ENCODE measurements at regions of chr9 and their contacts with region 1.

Region 1: GRCh38 chr9:77456829-77457437 is 191.2 kb downstream of the GNA14 start:
- DNase-seq: peak; percentile 87 to 91
- H3K4me3 ChIP-seq: no peak overlapping the region
- H3K27ac ChIP-seq: peak overlapping the region; percentile 54 to 67
- H3K4me1 ChIP-seq: no peaks in the 10 kb centered on the region
- H3K27me3 ChIP-seq: no peaks in the 10 kb centered on the region
- CTCF ChIP-seq: peak; percentile 81 to 93 (median 84)
- POLR2A ChIP-seq: no peak

Region 2: GRCh38 chr9:77215874-77216273 is 241.1 kb before region 1 on chr9:
- intact Hi-C with region 1: no loop called
- DNase-seq: no peak
- H3K4me3 ChIP-seq: no peak overlapping the region
- H3K27ac ChIP-seq: no peak overlapping the region
- H3K4me1 ChIP-seq: no peaks in the 10 kb centered on the region
- H3K27me3 ChIP-seq: no peaks in the 10 kb centered on the region
- CTCF ChIP-seq: peak in 1 of 4 experiments; percentile 23
- POLR2A ChIP-seq: no peak

Region 3: GRCh38 chr9:77598524-77598923 is 141.6 kb after region 1 on chr9:
- intact Hi-C with region 1: no loop called
- DNase-seq: peak; percentile 27 to 31
- H3K4me3 ChIP-seq: no peak overlapping the region
- H3K27ac ChIP-seq: peak overlapping the region; percentile 52 to 70
- H3K4me1 ChIP-seq: peaks cover 0 to 17% of the 10 kb centered on the region in 2 donors
- H3K27me3 ChIP-seq: no peaks in the 10 kb centered on the region
- CTCF ChIP-seq: no peak
- POLR2A ChIP-seq: no peak

Region 4: DNA sequence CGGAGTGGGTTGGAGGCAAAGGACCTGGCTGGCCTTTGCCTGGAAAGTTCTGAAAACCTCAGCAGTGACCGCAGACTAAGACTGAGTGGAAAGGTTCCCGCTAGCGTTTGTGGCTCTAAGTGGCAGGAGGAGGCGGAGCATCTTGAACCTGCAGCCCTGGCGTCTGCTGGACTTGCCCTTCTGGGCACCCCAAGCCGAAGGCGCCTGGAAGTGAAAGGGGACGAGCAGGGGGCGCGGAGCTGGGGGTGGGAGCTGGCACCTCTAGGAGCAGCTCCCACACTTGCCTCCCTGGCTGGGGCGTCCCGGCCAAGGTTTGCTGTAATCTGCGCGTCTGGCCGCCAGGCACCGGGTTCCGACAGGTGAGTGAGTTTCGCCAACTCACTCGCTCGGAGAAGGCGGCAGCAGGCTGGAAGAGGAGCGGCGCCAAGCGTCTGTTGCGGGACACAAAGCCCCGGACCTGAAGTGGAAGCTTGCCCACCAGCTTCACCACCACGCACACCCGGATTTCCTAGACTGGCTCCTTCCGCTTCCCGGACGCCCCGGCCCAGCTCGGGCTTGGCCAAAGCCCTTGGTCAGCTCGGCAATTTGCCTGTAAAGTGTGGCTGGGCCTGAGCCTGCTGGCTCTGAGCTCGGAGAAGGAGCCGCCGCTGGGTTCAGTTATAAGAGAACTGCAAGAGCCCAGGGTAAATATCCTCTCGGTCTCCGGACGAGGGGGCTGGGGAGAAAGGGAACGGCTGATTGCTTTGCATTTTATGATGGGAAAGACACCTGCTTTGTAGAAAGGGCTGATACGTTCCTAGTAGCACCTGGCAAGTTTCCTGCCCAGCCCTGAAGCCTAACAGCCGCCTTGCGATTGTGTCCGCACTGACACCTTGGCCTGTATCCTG is 191.5 kb after region 1 on chr9 and contains the start of gene GNA14:
- intact Hi-C with region 1: loop called (anchors 5 kb)
- DNase-seq: peak; percentile 65 to 69
- H3K4me3 ChIP-seq: peak within 1 kb of the TSS; percentile 59 to 70
- H3K27ac ChIP-seq: peak within 1 kb of the TSS; percentile 86 to 89
- H3K4me1 ChIP-seq: no peaks in the 10 kb centered on the region
- H3K27me3 ChIP-seq: no peaks in the 10 kb centered on the region
- CTCF ChIP-seq: peak in 2 of 4 experiments; percentile 13 to 14
- POLR2A ChIP-seq: peak in 1 of 2 donors; percentile 30
- total RNA-seq, gene GNA14: 11.3 to 23.6 (median 16.2) TPM

Region 5: GRCh38 chr9:77751341-77752091 is 294.6 kb after region 1 on chr9:
- intact Hi-C with region 1: loop called (anchors 10 kb)
- DNase-seq: peak in 1 of 2 donors; percentile 51
- H3K4me3 ChIP-seq: no peak overlapping the region
- H3K27ac ChIP-seq: peak overlapping the region; percentile 48 to 83
- H3K4me1 ChIP-seq: no peaks in the 10 kb centered on the region
- H3K27me3 ChIP-seq: no peaks in the 10 kb centered on the region
- CTCF ChIP-seq: peak; percentile 53 to 61 (median 58)
- POLR2A ChIP-seq: no peak